ENCODE measurements at regions of chr2 and their contacts with region 1.

Region 1: DNA sequence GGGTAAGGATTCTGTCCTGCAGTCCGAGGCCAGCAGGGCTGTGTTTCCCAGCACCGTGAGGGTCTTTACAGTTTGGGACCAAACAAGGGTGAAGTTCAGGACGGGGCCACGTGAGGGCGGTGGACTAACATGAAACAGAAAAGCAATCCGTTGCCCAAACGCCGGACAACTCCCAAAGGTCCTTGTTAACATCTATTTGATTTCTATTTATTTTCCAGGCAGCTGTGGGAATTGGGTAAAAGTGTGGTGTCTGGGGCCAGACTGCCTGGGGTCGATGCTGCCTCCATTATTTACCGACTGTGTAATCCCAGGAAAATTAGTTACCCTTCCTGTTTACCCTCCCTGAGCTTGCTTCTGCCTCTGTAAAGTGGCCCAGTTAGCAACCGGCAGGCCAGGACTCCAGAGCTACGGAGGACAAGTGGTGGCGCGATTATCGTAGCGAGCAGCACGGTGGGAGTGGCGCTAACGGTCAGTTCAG is 66.3 kb upstream of the TCF7L1 start:
- DNase-seq: peak; percentile 66
- H3K4me3 Mint-ChIP-seq: no peak overlapping the region
- H3K27ac Mint-ChIP-seq: no peak overlapping the region
- H3K4me1 Mint-ChIP-seq: peaks cover 4% of the 10 kb centered on the region
- H3K27me3 Mint-ChIP-seq: peaks cover 19% of the 10 kb centered on the region

Region 2: GRCh38 chr2:85053802-85054201 is 13.1 kb before region 1 on chr2:
- CTCF ChIA-PET with region 1: interaction called, 12 read pairs
- POLR2A ChIA-PET with region 1: no interaction called
- intact Hi-C with region 1: no loop called
- DNase-seq: peak; percentile 24
- H3K4me3 Mint-ChIP-seq: no peak overlapping the region
- H3K27ac Mint-ChIP-seq: no peak overlapping the region
- H3K4me1 Mint-ChIP-seq: peaks cover 18% of the 10 kb centered on the region
- H3K27me3 Mint-ChIP-seq: no peaks in the 10 kb centered on the region

Region 3: DNA sequence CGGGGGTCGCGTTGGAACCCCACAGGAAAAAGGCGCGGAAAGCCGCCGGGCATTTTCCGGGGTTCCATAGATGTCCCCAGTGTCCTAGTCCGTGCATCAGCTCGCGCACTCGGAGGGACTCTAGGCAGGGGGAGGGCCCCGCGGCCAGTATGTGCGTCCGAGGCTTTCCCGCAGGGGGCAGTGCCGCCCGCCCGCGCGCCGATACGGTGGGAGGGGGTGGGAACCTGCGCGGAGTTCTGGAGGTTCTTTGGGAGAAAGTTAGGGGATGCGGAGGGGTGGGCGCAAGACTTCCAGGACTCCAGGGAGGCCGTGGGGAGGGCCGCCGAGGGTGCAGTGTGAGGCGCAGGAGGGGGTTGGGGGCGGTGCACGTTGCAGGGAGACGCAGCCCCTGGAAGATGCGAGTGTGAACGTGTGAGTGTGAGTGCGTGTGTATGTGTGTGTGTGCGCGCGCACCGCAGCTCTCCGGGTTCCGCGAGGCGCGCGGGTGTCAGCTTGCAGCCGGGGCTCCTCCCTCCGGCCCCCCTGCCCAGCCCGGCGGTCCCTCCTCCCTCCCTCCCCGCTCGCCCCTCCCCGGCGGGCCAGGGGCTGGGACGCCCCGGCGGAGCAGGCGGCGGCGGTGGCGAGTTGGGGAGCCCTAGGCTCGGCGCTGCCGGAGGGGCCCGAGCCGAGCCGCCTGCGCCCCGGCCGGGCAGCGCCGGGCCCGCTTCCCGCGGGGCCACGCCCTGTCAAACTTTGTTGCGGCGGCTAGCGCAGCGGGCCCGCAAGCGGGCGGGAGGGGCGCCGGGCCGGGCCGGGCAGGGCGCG is 66.1 kb after region 1 on chr2 and contains the start of gene TCF7L1:
- CTCF ChIA-PET with region 1: interaction called, 3 read pairs
- POLR2A ChIA-PET with region 1: no interaction called
- intact Hi-C with region 1: loop called (anchors 2 kb)
- DNase-seq: peak; percentile 59
- H3K4me3 Mint-ChIP-seq: peak within 1 kb of the TSS; percentile 62
- H3K27ac Mint-ChIP-seq: no peak within 1 kb of the TSS
- H3K4me1 Mint-ChIP-seq: peaks cover 4% of the 10 kb centered on the region
- H3K27me3 Mint-ChIP-seq: peaks cover 50% of the 10 kb centered on the region
- total RNA-seq, gene TCF7L1: 0.07 TPM in 1 of 2 experiments, not detected in the other

Region 4: GRCh38 chr2:85282914-85283313 is 216.0 kb after region 1 on chr2:
- CTCF ChIA-PET with region 1: interaction called, 24 read pairs
- POLR2A ChIA-PET with region 1: no interaction called
- intact Hi-C with region 1: loop called (anchors 5 kb)
- DNase-seq: no peak
- H3K4me3 Mint-ChIP-seq: no peak overlapping the region
- H3K27ac Mint-ChIP-seq: no peak overlapping the region
- H3K4me1 Mint-ChIP-seq: peaks cover 6% of the 10 kb centered on the region
- H3K27me3 Mint-ChIP-seq: no peaks in the 10 kb centered on the region

Region 5: DNA sequence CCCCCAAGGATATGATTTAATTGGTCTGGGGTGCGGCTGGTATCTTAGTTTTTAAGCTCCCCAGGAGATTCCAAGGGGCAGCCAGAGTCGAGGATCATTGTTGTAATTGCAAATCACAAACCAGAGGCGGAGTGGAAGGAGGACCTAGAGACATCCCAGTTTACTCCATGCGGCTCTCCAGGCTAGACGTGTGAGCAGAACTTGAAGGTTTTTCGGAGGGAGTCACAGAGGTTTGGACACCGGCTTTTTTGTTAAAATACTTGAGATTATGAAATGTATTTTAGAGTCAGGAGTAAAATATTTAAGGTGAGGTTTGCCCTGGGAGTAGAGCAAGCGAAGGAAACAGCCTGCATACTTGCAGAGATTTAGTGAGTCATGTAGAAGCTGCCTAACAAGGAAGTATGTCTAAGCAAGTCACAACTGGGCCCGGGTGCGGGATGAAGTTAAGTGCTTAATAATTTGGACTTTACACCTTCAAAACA is 221.4 kb after region 1 on chr2:
- CTCF ChIA-PET with region 1: interaction called, 24 read pairs
- POLR2A ChIA-PET with region 1: no interaction called
- intact Hi-C with region 1: loop called (anchors 5 kb)
- DNase-seq: no peak
- H3K4me3 Mint-ChIP-seq: no peak overlapping the region
- H3K27ac Mint-ChIP-seq: no peak overlapping the region
- H3K4me1 Mint-ChIP-seq: peaks cover 16% of the 10 kb centered on the region
- H3K27me3 Mint-ChIP-seq: no peaks in the 10 kb centered on the region

Measured in activated CD4-positive, alpha-beta memory T cell treated with anti-CD3 and anti-CD28 coated beads for 36 hours (primary cell).